MCF 10A (cell line): ENCODE measurements at regions of chr2 and their contacts with region 1.

Region 1: DNA sequence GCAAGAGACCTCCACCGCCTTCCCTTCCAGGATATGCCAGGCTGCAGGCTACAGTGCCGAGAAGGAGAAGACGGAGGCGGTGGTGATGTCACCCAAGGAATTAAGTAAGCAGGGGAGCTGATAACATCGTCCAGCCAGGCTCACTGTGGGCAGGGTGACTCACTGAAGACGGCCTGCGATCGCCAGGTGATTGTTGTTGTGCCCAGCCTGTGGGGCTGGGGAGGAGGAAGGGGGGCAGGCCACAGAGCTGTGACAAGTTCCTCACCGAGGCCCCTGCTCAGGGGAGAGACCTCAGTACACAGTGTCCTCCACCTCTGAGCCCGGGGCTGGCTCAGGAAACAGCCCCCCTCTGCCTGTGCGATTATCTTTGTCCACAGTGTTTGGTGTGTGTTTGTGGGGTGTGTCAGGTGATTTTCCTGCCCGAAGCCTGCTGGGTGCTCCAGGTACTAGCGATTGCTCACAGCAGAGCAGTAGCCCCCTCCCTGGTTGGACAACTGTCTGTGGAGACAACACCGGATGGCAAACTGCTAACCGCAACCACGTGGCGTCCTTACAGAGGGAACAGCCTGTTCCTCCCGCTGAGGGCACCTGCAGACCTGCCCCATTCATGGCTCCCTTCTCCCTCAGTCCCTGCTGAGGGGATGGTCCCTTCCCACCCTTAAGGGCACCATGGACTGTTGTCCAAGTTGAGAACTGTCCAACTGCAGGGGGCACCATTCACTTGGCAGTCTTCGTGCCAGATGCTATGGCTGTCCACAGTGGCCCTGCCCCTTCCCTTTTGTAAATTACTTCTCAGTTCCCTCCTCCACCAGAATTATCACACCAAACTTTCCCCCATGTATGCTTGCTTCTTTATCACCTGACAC is 95.1 kb downstream of the ZFP36L2 start:
- DNase-seq: peak; percentile 99
- H3K4me3 Mint-ChIP-seq: peak overlapping the region; percentile 19
- H3K27ac Mint-ChIP-seq: peak overlapping the region; percentile 89
- H3K4me1 Mint-ChIP-seq: peaks cover 42% of the 10 kb centered on the region
- H3K27me3 Mint-ChIP-seq: no peaks in the 10 kb centered on the region
- CTCF ChIP-seq: peak; percentile 63

Region 2: DNA sequence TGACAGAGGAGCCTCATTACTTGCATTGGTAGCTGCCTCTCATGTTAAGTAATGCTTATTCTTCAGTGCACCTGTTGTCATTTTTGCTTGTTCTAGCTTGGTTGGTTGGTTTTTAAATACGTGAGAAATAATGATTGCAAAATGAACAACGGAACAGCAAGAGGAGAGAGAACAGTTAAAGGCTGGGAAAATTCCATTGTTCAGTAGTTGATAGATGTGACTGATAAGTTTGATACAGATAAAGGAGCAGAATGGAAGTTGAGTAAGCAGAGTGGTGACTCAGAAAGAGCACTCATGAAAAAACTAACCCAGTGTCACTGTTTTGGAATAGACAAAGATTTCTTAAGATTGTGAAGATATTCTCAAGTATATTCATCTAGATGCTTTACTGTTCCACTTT is 512.3 kb before region 1 on chr2:
- CTCF ChIA-PET with region 1: no interaction called
- POLR2A ChIA-PET with region 1: no interaction called
- intact Hi-C with region 1: no loop called
- DNase-seq: peak; percentile 47
- H3K4me3 Mint-ChIP-seq: no peak overlapping the region
- H3K27ac Mint-ChIP-seq: peak overlapping the region; percentile 24
- H3K4me1 Mint-ChIP-seq: peaks cover 12% of the 10 kb centered on the region
- H3K27me3 Mint-ChIP-seq: no peaks in the 10 kb centered on the region
- CTCF ChIP-seq: no peak

Region 3: DNA sequence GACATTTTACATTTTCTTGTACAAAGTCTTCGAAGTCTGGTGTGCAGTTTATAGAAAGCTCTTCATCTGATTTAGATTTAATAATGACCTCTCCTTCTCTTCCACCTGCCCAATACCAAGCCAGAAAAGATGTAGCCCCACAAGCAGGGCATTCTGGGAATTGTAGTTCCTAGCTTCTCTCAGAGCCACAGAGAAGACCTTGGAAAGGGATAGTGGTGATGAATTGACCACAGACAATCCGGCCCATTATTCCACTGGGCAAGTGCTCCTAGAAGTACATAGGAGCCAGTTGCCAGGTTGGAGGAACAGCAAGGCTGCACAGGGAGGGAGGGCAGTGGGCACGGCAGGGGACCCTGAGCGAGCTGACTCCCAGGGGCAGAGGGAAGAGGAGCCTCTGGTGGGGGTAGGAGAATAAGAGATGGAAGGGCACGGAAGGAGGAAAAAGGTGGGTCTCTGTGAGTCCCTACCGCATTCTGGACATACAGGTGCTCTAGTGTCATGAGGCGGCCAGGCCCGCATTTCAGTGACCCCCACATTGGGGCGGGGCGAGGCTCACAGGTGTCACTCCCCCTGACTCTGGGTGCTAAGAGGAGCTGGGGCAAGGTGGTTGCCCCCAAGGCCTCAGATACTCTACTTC is 186.4 kb before region 1 on chr2:
- CTCF ChIA-PET with region 1: no interaction called
- POLR2A ChIA-PET with region 1: interaction called, 5 read pairs
- intact Hi-C with region 1: loop called (anchors 1 kb)
- DNase-seq: no peak
- H3K4me3 Mint-ChIP-seq: no peak overlapping the region
- H3K27ac Mint-ChIP-seq: no peak overlapping the region
- H3K4me1 Mint-ChIP-seq: peaks cover 10% of the 10 kb centered on the region
- H3K27me3 Mint-ChIP-seq: no peaks in the 10 kb centered on the region
- CTCF ChIP-seq: no peak

Region 4: GRCh38 chr2:43024515-43025011 is 106.7 kb before region 1 on chr2:
- CTCF ChIA-PET with region 1: interaction called, 5 read pairs
- POLR2A ChIA-PET with region 1: interaction called, 9 read pairs
- intact Hi-C with region 1: loop called (anchors 1 kb)
- DNase-seq: peak; percentile 75
- H3K4me3 Mint-ChIP-seq: no peak overlapping the region
- H3K27ac Mint-ChIP-seq: no peak overlapping the region
- H3K4me1 Mint-ChIP-seq: peaks cover 29% of the 10 kb centered on the region
- H3K27me3 Mint-ChIP-seq: no peaks in the 10 kb centered on the region
- CTCF ChIP-seq: peak; percentile 75

Region 5: DNA sequence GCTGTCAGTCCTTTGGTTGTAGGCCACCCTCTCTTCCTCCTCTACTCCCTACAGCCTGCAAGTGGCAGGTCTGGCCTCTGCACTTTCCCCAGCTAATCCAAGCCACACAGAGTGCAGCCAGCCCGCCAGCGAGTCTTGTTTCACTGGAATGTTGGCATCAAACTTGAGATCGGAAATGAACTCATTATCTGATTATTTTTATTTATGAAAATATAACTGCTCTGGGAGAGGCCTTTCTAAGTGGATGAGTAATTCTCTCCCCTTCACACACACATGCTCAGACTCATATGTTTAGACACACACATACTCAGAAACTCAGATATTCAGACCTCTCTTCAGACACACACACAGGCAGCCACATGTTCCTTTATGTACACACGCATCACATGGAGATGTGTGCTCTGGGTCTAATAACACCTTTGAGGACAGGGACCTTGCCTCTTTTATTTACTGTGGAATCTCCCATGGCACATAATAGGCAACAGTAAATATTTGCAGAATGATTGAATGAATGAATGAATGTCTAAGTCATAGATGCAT is 56.1 kb before region 1 on chr2:
- CTCF ChIA-PET with region 1: interaction called, 7 read pairs
- POLR2A ChIA-PET with region 1: interaction called, 12 read pairs
- intact Hi-C with region 1: loop called (anchors 1 kb)
- DNase-seq: peak; percentile 96
- H3K4me3 Mint-ChIP-seq: peak overlapping the region; percentile 76
- H3K27ac Mint-ChIP-seq: peak overlapping the region; percentile 89
- H3K4me1 Mint-ChIP-seq: peaks cover 64% of the 10 kb centered on the region
- H3K27me3 Mint-ChIP-seq: no peaks in the 10 kb centered on the region
- CTCF ChIP-seq: no peak

Region 6: DNA sequence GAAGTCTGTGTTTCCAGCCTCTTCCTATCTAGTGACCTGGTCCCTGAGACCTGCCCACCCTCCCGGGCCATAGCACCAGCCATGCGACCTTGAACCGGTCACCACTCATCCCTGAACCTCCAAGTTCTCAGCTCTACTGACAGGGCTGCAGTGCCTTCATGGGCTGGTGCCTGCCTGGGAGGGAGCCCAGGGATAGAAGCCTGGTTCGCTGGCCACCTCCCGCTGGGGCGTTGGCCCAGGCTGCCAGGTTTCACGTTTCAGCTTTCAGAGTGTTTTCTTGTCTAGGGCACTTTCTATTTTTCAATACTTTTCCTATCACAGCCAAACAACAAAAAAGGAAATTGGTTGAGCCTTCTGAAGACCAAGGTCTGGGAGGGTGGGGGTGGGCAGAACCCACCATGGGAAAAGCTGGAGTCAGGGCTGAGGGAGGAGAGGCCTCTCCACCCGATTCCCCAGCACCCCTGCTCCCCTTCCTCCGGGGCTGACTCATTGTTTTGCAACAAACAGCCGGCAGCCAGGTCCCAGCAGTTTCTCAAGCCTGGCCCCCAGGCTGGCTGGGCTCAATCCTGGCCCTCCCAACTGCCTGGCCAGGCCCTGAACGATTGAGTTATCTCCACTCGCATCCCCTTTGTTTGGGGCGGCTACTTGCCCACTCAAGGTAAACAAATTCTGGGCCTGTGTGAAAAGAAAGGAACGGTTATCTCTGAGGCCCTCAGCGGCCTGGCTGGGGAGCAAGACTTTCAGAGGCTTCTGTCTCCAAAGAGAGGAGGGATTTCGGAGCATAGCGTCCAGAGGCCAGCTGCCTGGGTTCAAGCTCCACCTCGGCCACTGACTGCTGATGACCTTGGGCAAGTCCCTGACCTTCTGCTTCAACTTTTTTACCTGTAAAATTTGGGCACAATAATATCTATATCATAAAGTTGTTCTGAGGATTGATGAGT is 47.6 kb after region 1 on chr2:
- CTCF ChIA-PET with region 1: interaction called, 7 read pairs
- POLR2A ChIA-PET with region 1: interaction called, 17 read pairs
- intact Hi-C with region 1: loop called (anchors 2 kb)
- DNase-seq: peak; percentile 95
- H3K4me3 Mint-ChIP-seq: peak overlapping the region; percentile 39
- H3K27ac Mint-ChIP-seq: peak overlapping the region; percentile 99
- H3K4me1 Mint-ChIP-seq: peaks cover 47% of the 10 kb centered on the region
- H3K27me3 Mint-ChIP-seq: no peaks in the 10 kb centered on the region
- CTCF ChIP-seq: no peak